ENCODE measurements at regions of chr5 and their contacts with region 1.

Region 1: GRCh38 chr5:133944263-133945185 is 23.9 kb downstream of the C5orf15 start:
- DNase-seq: no peak
- ATAC-seq: peak in 1 of 2 donors; percentile 44
- H3K4me3 ChIP-seq: no peak overlapping the region
- H3K27ac ChIP-seq: no peak overlapping the region
- H3K4me1 ChIP-seq: peaks cover 0 to 5% of the 10 kb centered on the region in 2 donors
- H3K27me3 ChIP-seq: no peaks in the 10 kb centered on the region
- CTCF ChIP-seq: peak in 4 of 5 experiments; percentile 15 to 63 (median 46)
- POLR2A ChIP-seq: no peak

Region 2: GRCh38 chr5:133715622-133716021 is 228.9 kb before region 1 on chr5:
- in situ Hi-C with region 1: no loop called
- intact Hi-C with region 1: no loop called
- DNase-seq: no peak
- ATAC-seq: no peak
- H3K4me3 ChIP-seq: no peak overlapping the region
- H3K27ac ChIP-seq: no peak overlapping the region
- H3K4me1 ChIP-seq: no peaks in the 10 kb centered on the region
- H3K27me3 ChIP-seq: no peaks in the 10 kb centered on the region
- CTCF ChIP-seq: no peak
- POLR2A ChIP-seq: no peak

Region 3: DNA sequence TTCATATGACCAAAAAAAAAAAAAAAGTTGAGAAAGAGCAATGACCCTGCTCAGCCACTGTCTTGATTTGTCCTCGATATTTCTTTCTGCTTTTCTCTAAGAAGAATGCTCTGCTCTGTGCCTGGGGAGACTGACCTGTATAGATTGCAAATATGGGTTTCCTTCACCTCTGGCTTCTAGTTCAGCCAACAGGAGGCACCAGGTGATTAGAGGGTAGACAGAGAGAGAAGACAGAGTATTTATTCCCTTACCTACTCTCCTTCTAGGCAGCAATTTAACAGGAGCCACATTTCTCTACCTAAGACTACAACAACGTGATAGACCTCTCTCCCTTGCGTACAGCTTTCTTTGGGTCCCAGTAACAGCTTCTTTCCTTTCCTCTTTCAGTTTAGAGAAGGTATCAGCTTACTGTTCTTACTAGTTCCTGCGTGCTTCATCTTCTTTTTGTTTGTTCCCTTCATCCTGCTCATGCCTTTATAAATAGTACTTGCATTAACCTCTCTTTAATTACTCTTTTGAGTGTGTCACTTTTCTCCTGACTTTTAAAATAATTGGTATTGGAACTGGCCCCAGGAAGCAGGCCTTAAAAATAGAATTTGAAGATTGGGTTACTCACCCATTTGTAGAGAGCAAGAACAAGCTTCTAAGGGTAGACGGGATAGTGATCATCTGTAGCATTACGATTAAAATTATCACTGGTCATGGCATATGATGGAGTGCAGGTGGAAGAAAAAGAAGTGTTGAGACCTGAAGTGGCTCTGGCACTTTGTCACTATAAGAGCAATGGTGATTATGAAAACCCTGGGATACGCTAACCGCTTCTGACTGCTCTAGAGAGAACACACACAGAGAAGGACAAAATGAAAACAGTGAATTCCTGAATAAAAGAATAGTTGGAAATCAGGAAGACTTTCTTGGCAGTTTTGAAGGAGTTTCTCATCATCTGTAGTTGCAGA is 171.0 kb before region 1 on chr5:
- in situ Hi-C with region 1: no loop called
- intact Hi-C with region 1: loop called (anchors 5 kb)
- DNase-seq: no peak
- ATAC-seq: peak; percentile 81 to 87
- H3K4me3 ChIP-seq: no peak overlapping the region
- H3K27ac ChIP-seq: peak overlapping the region; percentile 39 to 78 (median 68)
- H3K4me1 ChIP-seq: peaks cover 8 to 11% of the 10 kb centered on the region in 2 donors
- H3K27me3 ChIP-seq: no peaks in the 10 kb centered on the region
- CTCF ChIP-seq: peak in 3 of 5 experiments; percentile 4 to 28 (median 8)
- POLR2A ChIP-seq: no peak